ENCODE measurements at regions of chr3 and their contacts with region 1.

Region 1: GRCh38 chr3:138329127-138329983 is at the start of gene NME9:
- DNase-seq: peak; percentile 89
- H3K4me3 Mint-ChIP-seq: peak within 1 kb of the TSS; percentile 91
- H3K27ac Mint-ChIP-seq: peak within 1 kb of the TSS; percentile 82
- H3K4me1 Mint-ChIP-seq: peaks cover 28% of the 10 kb centered on the region
- H3K27me3 Mint-ChIP-seq: peaks cover 11% of the 10 kb centered on the region

Region 2: DNA sequence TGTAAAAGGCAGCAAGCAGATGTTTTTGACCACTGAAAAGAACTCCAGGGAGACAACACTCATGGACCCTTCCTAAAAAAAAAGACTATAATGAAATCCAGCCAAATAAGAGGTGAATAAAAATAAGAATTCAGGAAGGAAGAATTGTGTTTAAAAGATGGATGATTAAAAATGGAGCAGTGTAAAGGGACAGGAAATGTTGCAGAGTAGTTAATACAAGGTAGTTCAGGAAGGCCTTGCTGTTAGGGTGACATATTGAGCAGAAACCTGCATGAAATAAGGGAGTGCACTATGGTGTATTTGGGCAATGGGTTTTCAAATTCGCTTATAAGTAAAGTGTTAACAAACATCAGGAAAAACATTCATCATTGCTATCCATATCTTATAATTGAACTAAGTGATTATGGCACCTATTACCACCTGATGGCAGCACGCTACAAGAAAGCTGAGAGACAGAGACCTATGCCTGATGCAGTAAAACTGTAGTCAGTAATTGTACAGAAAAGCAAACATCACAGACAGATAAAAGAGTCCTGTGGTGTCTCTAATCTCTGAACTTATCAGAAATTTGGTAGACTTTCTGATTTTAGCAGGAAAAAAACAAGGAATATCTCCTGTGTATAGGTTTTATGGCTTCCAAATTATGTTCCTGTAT is 148.9 kb before region 1 on chr3:
- CTCF ChIA-PET with region 1: interaction called, 19 read pairs
- DNase-seq: peak; percentile 60
- H3K4me3 Mint-ChIP-seq: no peak overlapping the region
- H3K27ac Mint-ChIP-seq: no peak overlapping the region
- H3K4me1 Mint-ChIP-seq: no peaks in the 10 kb centered on the region
- H3K27me3 Mint-ChIP-seq: peaks cover 28% of the 10 kb centered on the region

Region 3: DNA sequence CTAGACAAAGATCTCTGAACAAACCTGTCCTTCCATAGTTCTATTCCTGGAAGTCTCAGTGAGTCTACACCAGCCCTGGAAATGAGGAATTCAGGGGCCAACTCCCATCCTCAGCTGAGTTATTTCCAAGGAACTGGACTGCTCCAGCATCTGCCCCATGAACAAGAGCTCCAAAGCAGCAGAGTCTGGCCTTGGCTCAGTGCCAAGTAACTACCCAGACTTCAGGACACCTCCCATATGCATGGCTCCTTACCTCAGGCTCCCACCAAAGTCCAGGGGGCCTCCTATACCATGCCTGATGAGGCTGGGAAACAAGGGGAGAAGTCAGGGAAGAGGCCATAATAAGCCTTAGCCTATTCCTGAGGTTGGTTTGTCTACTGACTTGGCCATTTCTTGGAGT is 324.2 kb after region 1 on chr3:
- CTCF ChIA-PET with region 1: no interaction called
- DNase-seq: no peak
- H3K4me3 Mint-ChIP-seq: no peak overlapping the region
- H3K27ac Mint-ChIP-seq: no peak overlapping the region
- H3K4me1 Mint-ChIP-seq: no peaks in the 10 kb centered on the region
- H3K27me3 Mint-ChIP-seq: no peaks in the 10 kb centered on the region